ENCODE measurements at regions of chrX and their contacts with region 1.

Region 1: DNA sequence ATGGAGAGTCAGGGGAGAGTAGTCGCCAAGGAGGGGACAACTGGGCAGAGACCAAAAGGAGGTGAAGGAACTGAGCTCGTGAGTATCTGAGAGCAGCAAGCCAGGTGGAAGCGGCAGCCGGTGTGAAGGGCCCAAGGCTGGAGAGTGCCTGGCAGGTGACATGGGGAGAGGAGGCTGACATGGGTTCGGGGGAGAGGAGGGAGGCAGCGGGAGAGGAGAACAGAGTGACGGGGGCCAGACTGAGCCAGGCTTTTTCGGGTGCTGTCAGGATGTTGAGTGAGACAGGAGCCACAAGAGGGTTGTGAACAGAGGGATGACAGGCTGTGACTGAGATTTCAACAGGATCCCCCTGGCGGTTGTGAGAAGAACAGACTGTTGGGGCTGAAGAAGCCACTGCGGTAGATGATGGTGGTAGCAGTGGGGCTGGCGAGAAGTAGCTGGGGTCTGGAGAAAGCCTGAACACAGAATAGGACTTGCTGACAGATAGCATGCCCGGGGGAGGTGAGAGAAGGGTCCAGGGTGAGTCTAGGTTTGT is 5.7 kb downstream of the ELK1 start:
- DNase-seq: no peak
- ATAC-seq: peak; percentile 82
- H3K4me3 ChIP-seq: no peak overlapping the region
- H3K27ac ChIP-seq: no peak overlapping the region
- H3K4me1 ChIP-seq: no peaks in the 10 kb centered on the region
- H3K27me3 ChIP-seq: no peaks in the 10 kb centered on the region
- CTCF ChIP-seq: no peak
- EP300 ChIP-seq: no peak
- POLR2A ChIP-seq: no peak
- RAD21 ChIP-seq: no peak

Region 2: GRCh38 chrX:47540754-47541538 is 103.7 kb before region 1 on chrX:
- CTCF ChIA-PET with region 1: no interaction called
- POLR2A ChIA-PET with region 1: no interaction called
- in situ Hi-C with region 1: no loop called
- intact Hi-C with region 1: loop called (anchors 5 kb)
- DNase-seq: peak; percentile 81
- ATAC-seq: peak; percentile 100
- H3K4me3 ChIP-seq: no peak overlapping the region; a peak in 1 of 6 replicates
- H3K27ac ChIP-seq: no peak overlapping the region
- H3K4me1 ChIP-seq: no peaks in the 10 kb centered on the region
- H3K27me3 ChIP-seq: no peaks in the 10 kb centered on the region
- CTCF ChIP-seq: peak; percentile 66
- EP300 ChIP-seq: no peak
- POLR2A ChIP-seq: no peak
- RAD21 ChIP-seq: no peak

Region 3: GRCh38 chrX:47560831-47561652 is 83.6 kb before region 1 on chrX and contains the start of gene ARAF:
- CTCF ChIA-PET with region 1: no interaction called
- POLR2A ChIA-PET with region 1: no interaction called
- in situ Hi-C with region 1: loop called (anchors 5 kb)
- intact Hi-C with region 1: no loop called
- DNase-seq: peak; percentile 98
- ATAC-seq: peak; percentile 99
- H3K4me3 ChIP-seq: peak within 1 kb of the TSS; percentile 60 to 77 (median 77)
- H3K27ac ChIP-seq: peak within 1 kb of the TSS; percentile 86
- H3K4me1 ChIP-seq: peaks cover 8% of the 10 kb centered on the region; the same call in 1 of the 2 replicates
- H3K27me3 ChIP-seq: no peaks in the 10 kb centered on the region
- CTCF ChIP-seq: no peak
- EP300 ChIP-seq: no peak
- POLR2A ChIP-seq: peak; percentile 52 to 73; a peak in 3 of 4 replicates
- RAD21 ChIP-seq: no peak
- total RNA-seq, gene ARAF: 15.0 and 18.0 TPM in 2 replicates

Measured in HepG2 (cell line).